ENCODE measurements at regions of chr19 and their contacts with region 1.

Region 1: GRCh38 chr19:33235269-33235995 is 9.8 kb upstream of the SLC7A10 start:
- DNase-seq: peak; percentile 78
- ATAC-seq: peak; percentile 58
- H3K4me3 ChIP-seq: peak overlapping the region in 2 of 5 experiments; percentile 25 to 31
- H3K4me3 Mint-ChIP-seq: peak overlapping the region; percentile 51
- H3K27ac ChIP-seq: no peak overlapping the region
- H3K27ac Mint-ChIP-seq: no peak overlapping the region
- H3K4me1 ChIP-seq: peaks cover 0 to 6% of the 10 kb centered on the region in 2 donors
- H3K4me1 Mint-ChIP-seq: peaks cover 6% of the 10 kb centered on the region
- H3K27me3 ChIP-seq: peaks cover 0 to 5% (median 0%) of the 10 kb centered on the region in 4 experiments
- H3K27me3 Mint-ChIP-seq: peaks cover 11% of the 10 kb centered on the region
- CTCF ChIP-seq: peak; percentile 95

Region 2: GRCh38 chr19:32208060-32208459 is 1027.4 kb before region 1 on chr19:
- CTCF ChIA-PET with region 1: no interaction called
- POLR2A ChIA-PET with region 1: no interaction called
- intact Hi-C with region 1: no loop called
- DNase-seq: no peak
- ATAC-seq: no peak
- H3K4me3 ChIP-seq: no peak overlapping the region
- H3K4me3 Mint-ChIP-seq: no peak overlapping the region
- H3K27ac ChIP-seq: no peak overlapping the region
- H3K27ac Mint-ChIP-seq: no peak overlapping the region
- H3K4me1 ChIP-seq: no peaks in the 10 kb centered on the region
- H3K4me1 Mint-ChIP-seq: no peaks in the 10 kb centered on the region
- H3K27me3 ChIP-seq: no peaks in the 10 kb centered on the region
- H3K27me3 Mint-ChIP-seq: peaks cover 3% of the 10 kb centered on the region
- CTCF ChIP-seq: no peak

Region 3: DNA sequence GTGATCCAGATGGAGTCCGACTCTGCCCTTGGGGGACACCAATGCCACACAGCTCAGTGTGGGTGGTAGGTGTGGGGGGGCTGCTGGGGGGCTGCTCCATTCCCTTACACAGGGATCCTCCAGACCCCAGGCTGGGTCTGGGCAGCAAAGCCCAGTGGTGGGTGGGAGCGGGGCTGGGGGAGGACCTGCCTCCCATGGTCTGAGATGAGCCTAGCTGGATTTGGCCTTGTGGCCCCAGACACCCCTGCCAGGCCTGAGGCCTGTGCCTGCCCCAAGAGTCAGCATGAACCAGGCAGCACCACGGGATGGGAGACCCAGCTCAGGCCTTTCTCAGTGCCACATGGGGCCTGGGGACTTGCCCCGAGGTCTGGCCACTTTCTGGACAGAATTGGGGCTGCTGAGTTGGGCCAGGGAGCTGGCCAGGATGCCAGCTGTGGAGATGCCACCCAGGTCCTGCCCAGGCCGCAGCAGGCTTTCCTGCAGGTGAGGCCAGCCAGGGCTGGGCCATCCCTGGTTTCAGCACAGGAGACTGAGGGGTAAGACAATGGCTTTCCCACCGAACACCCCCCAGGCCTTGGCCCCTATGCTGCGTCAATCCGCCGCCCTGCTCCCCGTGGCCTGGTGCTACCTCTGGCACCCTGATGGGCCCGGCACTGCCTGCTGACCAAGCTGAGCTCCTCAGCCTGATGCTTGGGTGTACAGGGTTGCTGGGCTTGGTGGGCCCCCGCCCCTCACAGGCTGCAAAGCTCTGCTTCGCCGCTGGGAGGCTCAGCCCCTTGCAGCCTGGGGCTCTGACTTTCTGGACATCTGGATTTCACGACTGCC is 162.3 kb after region 1 on chr19:
- CTCF ChIA-PET with region 1: interaction called, 16 read pairs
- POLR2A ChIA-PET with region 1: no interaction called
- intact Hi-C with region 1: no loop called
- DNase-seq: no peak
- ATAC-seq: no peak
- H3K4me3 ChIP-seq: no peak overlapping the region
- H3K4me3 Mint-ChIP-seq: no peak overlapping the region
- H3K27ac ChIP-seq: no peak overlapping the region
- H3K27ac Mint-ChIP-seq: no peak overlapping the region
- H3K4me1 ChIP-seq: no peaks in the 10 kb centered on the region
- H3K4me1 Mint-ChIP-seq: no peaks in the 10 kb centered on the region
- H3K27me3 ChIP-seq: no peaks in the 10 kb centered on the region
- H3K27me3 Mint-ChIP-seq: no peaks in the 10 kb centered on the region
- CTCF ChIP-seq: no peak

Region 4: DNA sequence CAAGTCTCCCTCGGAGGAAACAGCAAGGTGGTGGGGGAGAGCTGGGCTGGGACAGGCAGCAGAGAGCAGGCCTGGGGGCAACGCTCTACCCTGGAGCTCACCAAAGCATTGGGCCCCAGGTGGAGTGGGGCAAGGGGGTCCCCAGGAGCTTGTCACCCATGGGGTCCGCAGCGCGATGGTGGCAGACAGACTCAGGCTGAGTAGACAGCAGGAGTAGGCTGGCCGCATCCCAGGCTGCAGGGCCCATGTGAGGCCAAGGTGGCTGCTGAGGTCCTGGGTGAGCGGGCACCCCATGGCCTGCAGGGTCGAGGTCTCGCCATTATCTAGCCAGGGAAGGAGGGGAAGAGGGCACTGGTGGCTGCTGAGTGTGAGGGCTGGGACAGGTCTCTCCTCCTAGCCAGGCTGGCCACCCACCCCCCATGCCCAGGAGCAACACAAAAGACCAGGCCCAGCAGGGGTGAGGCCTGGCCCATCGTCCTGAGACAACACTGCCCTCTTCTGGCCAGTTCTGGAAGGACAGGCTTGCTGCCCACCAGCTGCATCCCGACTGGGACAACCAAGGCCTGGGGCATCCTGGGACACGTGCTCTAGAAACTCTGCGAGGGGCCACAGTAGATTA is 171.2 kb after region 1 on chr19:
- CTCF ChIA-PET with region 1: interaction called, 211 read pairs
- POLR2A ChIA-PET with region 1: no interaction called
- intact Hi-C with region 1: loop called (anchors 1 kb)
- DNase-seq: peak; percentile 78
- ATAC-seq: peak; percentile 85
- H3K4me3 ChIP-seq: no peak overlapping the region
- H3K4me3 Mint-ChIP-seq: no peak overlapping the region
- H3K27ac ChIP-seq: no peak overlapping the region
- H3K27ac Mint-ChIP-seq: no peak overlapping the region
- H3K4me1 ChIP-seq: no peaks in the 10 kb centered on the region
- H3K4me1 Mint-ChIP-seq: no peaks in the 10 kb centered on the region
- H3K27me3 ChIP-seq: no peaks in the 10 kb centered on the region
- H3K27me3 Mint-ChIP-seq: no peaks in the 10 kb centered on the region
- CTCF ChIP-seq: peak; percentile 90

Region 5: GRCh38 chr19:33416307-33417215 is 181.1 kb after region 1 on chr19:
- CTCF ChIA-PET with region 1: interaction called, 16 read pairs
- POLR2A ChIA-PET with region 1: no interaction called
- intact Hi-C with region 1: no loop called
- DNase-seq: peak; percentile 66
- ATAC-seq: peak; percentile 54
- H3K4me3 ChIP-seq: peak overlapping the region in 1 of 5 experiments; percentile 34
- H3K4me3 Mint-ChIP-seq: peak overlapping the region; percentile 42
- H3K27ac ChIP-seq: no peak overlapping the region
- H3K27ac Mint-ChIP-seq: no peak overlapping the region
- H3K4me1 ChIP-seq: peaks cover 4 to 5% of the 10 kb centered on the region in 2 donors
- H3K4me1 Mint-ChIP-seq: peaks cover 5% of the 10 kb centered on the region
- H3K27me3 ChIP-seq: no peaks in the 10 kb centered on the region
- H3K27me3 Mint-ChIP-seq: no peaks in the 10 kb centered on the region
- CTCF ChIP-seq: peak; percentile 60

Region 6: GRCh38 chr19:34712395-34713261 is 1477.2 kb after region 1 on chr19:
- CTCF ChIA-PET with region 1: no interaction called
- POLR2A ChIA-PET with region 1: no interaction called
- intact Hi-C with region 1: loop called (anchors 10 kb)
- DNase-seq: peak; percentile 83
- ATAC-seq: peak; percentile 56
- H3K4me3 ChIP-seq: no peak overlapping the region
- H3K4me3 Mint-ChIP-seq: no peak overlapping the region
- H3K27ac ChIP-seq: no peak overlapping the region
- H3K27ac Mint-ChIP-seq: no peak overlapping the region
- H3K4me1 ChIP-seq: no peaks in the 10 kb centered on the region
- H3K4me1 Mint-ChIP-seq: no peaks in the 10 kb centered on the region
- H3K27me3 ChIP-seq: peaks cover 0 to 12% (median 2%) of the 10 kb centered on the region in 4 experiments
- H3K27me3 Mint-ChIP-seq: peaks cover 30% of the 10 kb centered on the region
- CTCF ChIP-seq: peak; percentile 80

Measured in B cell (primary cell).